ENCODE measurements at regions of chr11 and their contacts with region 1.

Region 1: DNA sequence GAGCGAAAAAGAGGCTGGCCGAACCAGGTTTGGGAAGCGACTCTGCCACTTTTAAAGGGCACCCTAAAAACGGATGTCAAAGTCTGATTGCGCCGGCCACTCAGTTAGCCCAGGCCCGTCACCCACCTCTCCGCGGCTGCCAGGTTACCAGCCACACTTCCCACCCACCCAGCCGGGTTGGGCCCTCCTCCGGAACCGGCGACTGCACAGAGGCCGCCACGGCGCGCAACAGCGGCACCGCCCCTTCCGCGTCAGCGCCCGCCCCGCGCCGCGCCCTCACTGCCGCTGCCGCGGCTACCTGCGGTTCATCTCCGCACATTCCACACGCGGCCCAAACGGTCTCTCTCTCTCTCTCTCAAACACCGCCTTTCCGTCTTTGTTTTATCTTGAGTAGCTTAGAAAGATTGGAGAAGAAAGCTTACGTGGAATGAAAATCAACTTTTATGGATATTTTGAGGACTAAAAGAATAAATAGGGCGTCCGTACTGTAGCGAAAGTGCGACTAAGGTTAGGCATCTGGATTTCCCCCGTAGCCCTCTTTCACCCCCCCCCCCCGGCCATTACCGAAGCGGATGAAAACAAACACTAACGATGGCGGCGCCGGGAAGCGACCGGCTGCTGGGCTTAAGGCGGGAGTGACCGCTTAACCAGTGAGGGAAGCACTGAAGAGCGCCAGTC is at the starts of genes ATG13 and HARBI1:
- DNase-seq: peak; percentile 92 to 95 (median 93)
- H3K4me3 ChIP-seq: peak within 1 kb of the TSS; percentile 94 to 99
- H3K4me3 Mint-ChIP-seq: peak within 1 kb of the TSS; percentile 93 to 100 (median 99)
- H3K27ac ChIP-seq: peak within 1 kb of the TSS; percentile 99
- H3K27ac Mint-ChIP-seq: peak within 1 kb of the TSS; percentile 98 to 100 (median 99)
- H3K4me1 ChIP-seq: peaks cover 53% of the 10 kb centered on the region
- H3K4me1 Mint-ChIP-seq: peaks cover 24 to 58% (median 41%) of the 10 kb centered on the region in 4 donors
- H3K27me3 ChIP-seq: no peaks in the 10 kb centered on the region
- H3K27me3 Mint-ChIP-seq: no peaks in the 10 kb centered on the region
- total RNA-seq, gene ATG13: 86.0 to 96.2 TPM
- total RNA-seq, gene HARBI1: 7.2 to 9.4 TPM

Region 2: DNA sequence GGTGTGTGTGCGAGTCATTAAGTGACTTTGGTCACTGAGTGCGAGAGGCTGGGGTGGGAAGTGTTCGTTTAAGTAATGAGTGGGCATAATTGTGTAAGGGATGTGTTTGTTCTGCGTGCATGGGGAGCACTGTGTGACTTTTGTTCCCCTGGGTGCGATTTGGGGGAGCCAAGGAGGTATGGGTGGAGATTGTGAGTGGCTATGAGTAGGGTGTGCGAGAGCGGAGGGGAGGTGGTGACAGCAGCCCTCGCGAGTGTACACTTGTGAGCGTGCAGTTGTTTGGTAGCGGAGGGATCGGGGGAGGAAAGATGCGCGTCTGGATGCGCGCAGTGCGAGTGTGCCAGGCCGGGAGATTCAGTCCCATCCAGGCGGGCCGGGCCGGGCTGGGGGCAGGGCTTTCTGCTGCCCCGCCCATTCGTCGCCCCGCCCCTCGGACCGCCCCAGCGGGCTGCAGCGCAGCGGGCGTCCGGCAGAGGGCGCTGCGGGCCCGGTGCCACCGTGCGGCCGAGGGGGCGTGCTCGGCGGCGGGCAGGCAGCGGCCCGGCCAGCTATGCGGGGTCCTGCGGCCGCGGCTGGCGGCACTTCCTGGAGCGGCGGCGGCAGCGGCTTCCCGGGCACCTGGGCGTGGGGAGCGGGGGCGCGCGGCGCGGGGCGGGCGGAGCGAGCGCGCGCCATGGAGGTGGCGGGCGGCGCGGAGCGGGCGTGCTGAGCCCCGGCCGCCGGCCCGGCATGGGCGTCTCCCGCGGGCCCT is 270.1 kb before region 1 on chr11 and contains the start of gene DGKZ:
- CTCF ChIA-PET with region 1: no interaction called
- POLR2A ChIA-PET with region 1: interaction called, 5 read pairs
- intact Hi-C with region 1: loop called (anchors 1 kb)
- DNase-seq: peak; percentile 87 to 99 (median 95)
- H3K4me3 ChIP-seq: peak within 1 kb of the TSS; percentile 83 to 89
- H3K4me3 Mint-ChIP-seq: peak within 1 kb of the TSS; percentile 92 to 99 (median 94)
- H3K27ac ChIP-seq: peak within 1 kb of the TSS; percentile 83
- H3K27ac Mint-ChIP-seq: peak within 1 kb of the TSS; percentile 89 to 97 (median 94)
- H3K4me1 ChIP-seq: peaks cover 84% of the 10 kb centered on the region
- H3K4me1 Mint-ChIP-seq: peaks cover 49 to 94% (median 76%) of the 10 kb centered on the region in 4 donors
- H3K27me3 ChIP-seq: no peaks in the 10 kb centered on the region
- H3K27me3 Mint-ChIP-seq: peaks cover 0 to 2% of the 10 kb centered on the region in 2 donors
- total RNA-seq, gene DGKZ: 230 to 235 TPM

Region 3: DNA sequence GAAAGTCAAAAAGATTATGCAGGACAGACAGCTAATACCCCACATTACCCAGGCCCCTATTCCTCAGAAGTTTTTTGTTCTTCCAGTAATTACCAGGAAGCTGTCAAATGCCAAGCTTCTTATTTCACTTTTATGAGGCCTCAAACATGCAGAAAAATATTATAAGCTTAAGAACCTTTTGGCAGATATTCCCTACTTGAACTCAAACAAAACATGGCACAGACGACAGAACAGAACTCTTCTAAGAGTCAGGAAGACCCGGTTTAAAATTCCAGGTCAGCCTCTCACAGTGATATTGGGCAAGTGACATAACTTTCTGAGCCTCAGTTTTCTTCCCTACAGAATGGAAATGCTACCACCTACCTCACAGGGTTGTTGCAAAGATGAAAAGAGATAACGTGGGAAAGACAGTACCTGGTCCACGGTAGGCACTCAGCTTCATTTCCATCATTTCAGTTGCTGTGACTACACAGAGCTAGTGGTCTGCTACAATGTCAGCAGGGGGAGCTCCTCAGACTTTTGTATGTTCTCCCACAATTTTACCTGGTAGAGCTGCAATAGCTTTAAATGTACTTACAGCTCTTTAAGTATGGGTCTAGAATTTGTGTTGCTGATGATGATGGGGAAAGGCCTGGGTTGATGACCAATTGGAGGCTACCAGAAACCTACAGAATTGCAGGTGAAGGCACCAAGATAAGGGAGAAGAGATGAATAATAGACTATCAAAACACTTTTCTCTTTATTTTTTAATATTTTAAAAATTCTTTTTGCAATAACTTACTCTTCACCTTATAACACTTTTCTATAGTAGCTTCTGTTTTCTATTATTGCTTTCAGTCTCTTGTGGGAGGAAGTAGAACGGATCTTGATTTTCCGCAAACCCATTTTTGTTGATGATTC is 127.2 kb before region 1 on chr11:
- CTCF ChIA-PET with region 1: interaction called, 29 read pairs
- POLR2A ChIA-PET with region 1: no interaction called
- intact Hi-C with region 1: no loop called
- DNase-seq: peak in 4 of 5 donors; percentile 26 to 41 (median 32)
- H3K4me3 ChIP-seq: no peak overlapping the region
- H3K4me3 Mint-ChIP-seq: no peak overlapping the region
- H3K27ac ChIP-seq: no peak overlapping the region
- H3K27ac Mint-ChIP-seq: peak overlapping the region in 1 of 7 donors; percentile 43
- H3K4me1 ChIP-seq: no peaks in the 10 kb centered on the region
- H3K4me1 Mint-ChIP-seq: peaks cover 4 to 12% (median 7%) of the 10 kb centered on the region in 4 donors
- H3K27me3 ChIP-seq: no peaks in the 10 kb centered on the region
- H3K27me3 Mint-ChIP-seq: no peaks in the 10 kb centered on the region

Region 4: DNA sequence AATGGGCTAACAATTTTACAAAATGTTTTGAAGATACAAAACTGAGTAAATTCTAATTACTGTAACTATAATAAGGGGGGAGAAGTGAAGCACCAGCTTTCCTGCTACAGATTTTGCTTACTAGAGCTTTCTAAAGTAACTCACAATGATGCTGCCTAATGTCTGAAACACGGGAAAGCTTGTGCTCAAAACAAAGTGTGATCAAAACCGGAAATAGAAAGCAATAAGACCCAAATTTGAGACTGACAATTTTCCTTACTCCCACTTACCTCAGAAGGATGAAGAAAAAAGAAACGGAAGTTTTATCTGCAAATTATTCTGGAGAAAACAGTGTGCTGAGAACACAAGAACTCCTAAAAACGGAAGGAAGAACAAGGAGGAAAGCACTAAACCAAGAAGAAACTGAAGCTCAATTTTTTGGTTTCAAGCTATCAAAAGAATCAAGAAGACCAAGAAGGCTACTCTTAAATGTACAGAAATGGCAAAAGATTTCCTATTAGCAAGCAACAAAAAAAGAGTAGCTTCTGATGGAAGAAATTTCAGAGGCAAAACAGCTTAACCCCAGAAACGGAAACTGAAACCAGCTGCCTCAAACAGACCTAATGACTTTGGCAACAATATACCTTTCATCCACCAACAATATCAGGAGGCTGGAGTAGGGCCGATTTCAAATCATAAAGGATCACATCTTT is 56.7 kb before region 1 on chr11:
- CTCF ChIA-PET with region 1: interaction called, 11 read pairs
- POLR2A ChIA-PET with region 1: interaction called, 17 read pairs
- intact Hi-C with region 1: loop called (anchors 2 kb)
- DNase-seq: peak; percentile 30 to 50 (median 39)
- H3K4me3 ChIP-seq: peak overlapping the region; percentile 67 to 89
- H3K4me3 Mint-ChIP-seq: peak overlapping the region; percentile 78 to 96 (median 92)
- H3K27ac ChIP-seq: peak overlapping the region; percentile 77
- H3K27ac Mint-ChIP-seq: peak overlapping the region; percentile 90 to 99 (median 97)
- H3K4me1 ChIP-seq: peaks cover 59% of the 10 kb centered on the region
- H3K4me1 Mint-ChIP-seq: peaks cover 32 to 80% (median 55%) of the 10 kb centered on the region in 4 donors
- H3K27me3 ChIP-seq: no peaks in the 10 kb centered on the region
- H3K27me3 Mint-ChIP-seq: no peaks in the 10 kb centered on the region

Region 5: DNA sequence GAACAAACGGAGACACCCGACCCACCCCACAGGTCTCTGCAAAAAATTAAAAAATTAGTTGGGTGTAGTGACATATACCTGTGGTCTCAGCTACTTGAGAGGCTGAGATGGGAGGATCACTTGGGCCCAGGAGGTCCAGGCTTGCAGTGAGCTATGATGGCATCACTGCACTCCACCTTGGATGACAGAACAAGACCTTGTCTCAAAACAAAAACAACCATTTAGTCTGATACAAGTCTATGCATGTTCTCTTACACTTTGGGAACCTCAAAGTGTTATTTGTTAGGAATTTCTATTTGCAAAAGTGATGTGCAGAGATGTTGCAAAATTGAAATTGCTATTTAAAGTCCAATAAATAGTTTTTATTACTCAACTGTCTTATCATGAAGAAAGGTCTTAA is 14.5 kb after region 1 on chr11:
- CTCF ChIA-PET with region 1: interaction called, 12 read pairs
- POLR2A ChIA-PET with region 1: no interaction called
- intact Hi-C with region 1: no loop called
- DNase-seq: no peak
- H3K4me3 ChIP-seq: no peak overlapping the region
- H3K4me3 Mint-ChIP-seq: no peak overlapping the region
- H3K27ac ChIP-seq: no peak overlapping the region
- H3K27ac Mint-ChIP-seq: peak overlapping the region in 1 of 7 donors; percentile 38
- H3K4me1 ChIP-seq: peaks cover 4% of the 10 kb centered on the region
- H3K4me1 Mint-ChIP-seq: peaks cover 3 to 12% (median 9%) of the 10 kb centered on the region in 4 donors
- H3K27me3 ChIP-seq: no peaks in the 10 kb centered on the region
- H3K27me3 Mint-ChIP-seq: no peaks in the 10 kb centered on the region

Region 6: DNA sequence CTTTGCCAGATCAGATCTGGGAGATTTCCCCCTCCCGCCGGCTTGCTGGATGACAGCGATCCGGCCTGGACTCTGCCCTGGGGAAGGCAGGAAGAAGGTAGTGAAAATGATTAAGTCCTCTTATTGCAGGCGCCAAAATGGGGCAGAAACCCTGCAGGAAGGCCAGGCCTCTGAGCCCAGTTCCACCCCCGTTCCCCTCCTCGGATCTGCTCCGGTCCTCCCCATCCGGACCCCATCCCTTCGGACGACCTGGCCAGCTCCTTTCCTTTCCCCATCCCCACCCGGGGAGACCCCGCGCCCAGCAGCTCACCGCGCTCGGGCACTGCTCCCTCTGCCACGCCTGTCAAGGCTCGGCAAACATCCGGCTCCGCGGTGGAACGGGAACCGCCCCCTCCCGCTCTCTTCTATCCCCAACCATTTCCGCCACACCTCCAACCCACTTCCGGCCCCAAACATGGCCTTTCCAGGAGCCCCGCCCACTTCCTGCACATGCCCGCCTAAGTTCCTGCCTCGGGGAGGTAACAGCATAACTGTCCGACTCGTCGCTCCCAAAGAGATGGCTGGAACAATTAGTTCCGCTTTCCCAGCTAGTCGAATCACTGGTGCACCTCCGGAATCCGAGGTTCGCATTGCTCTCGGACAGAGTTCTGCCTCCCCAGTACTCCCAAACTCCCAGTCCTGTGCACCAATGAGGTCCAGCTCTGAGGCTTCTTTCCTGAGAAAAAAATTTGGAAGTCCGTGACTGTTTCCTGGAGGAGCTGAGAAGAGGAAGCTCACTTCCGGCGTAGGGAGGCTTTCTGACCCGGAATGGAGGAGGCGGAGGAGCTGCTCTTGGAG is 83.3 kb after region 1 on chr11 and contains the starts of genes ARHGAP1 and ZNF408:
- CTCF ChIA-PET with region 1: interaction called, 12 read pairs
- POLR2A ChIA-PET with region 1: interaction called, 20 read pairs
- intact Hi-C with region 1: loop called (anchors 1 kb)
- DNase-seq: peak; percentile 98 to 100 (median 99)
- H3K4me3 ChIP-seq: peak within 1 kb of the TSS; percentile 82 to 98
- H3K4me3 Mint-ChIP-seq: peak within 1 kb of the TSS; percentile 92 to 100 (median 99)
- H3K27ac ChIP-seq: peak within 1 kb of the TSS; percentile 86
- H3K27ac Mint-ChIP-seq: peak within 1 kb of the TSS; percentile 88 to 99 (median 96)
- H3K4me1 ChIP-seq: peaks cover 66% of the 10 kb centered on the region
- H3K4me1 Mint-ChIP-seq: peaks cover 32 to 73% (median 48%) of the 10 kb centered on the region in 4 donors
- H3K27me3 ChIP-seq: no peaks in the 10 kb centered on the region
- H3K27me3 Mint-ChIP-seq: no peaks in the 10 kb centered on the region
- total RNA-seq, gene ARHGAP1: 61.3 to 72.2 TPM
- total RNA-seq, gene ZNF408: 18.9 to 20.0 TPM

Measured in CD4-positive, alpha-beta memory T cell (primary cell).